ENCODE measurements at regions of chr19 and their contacts with region 1.

Region 1: DNA sequence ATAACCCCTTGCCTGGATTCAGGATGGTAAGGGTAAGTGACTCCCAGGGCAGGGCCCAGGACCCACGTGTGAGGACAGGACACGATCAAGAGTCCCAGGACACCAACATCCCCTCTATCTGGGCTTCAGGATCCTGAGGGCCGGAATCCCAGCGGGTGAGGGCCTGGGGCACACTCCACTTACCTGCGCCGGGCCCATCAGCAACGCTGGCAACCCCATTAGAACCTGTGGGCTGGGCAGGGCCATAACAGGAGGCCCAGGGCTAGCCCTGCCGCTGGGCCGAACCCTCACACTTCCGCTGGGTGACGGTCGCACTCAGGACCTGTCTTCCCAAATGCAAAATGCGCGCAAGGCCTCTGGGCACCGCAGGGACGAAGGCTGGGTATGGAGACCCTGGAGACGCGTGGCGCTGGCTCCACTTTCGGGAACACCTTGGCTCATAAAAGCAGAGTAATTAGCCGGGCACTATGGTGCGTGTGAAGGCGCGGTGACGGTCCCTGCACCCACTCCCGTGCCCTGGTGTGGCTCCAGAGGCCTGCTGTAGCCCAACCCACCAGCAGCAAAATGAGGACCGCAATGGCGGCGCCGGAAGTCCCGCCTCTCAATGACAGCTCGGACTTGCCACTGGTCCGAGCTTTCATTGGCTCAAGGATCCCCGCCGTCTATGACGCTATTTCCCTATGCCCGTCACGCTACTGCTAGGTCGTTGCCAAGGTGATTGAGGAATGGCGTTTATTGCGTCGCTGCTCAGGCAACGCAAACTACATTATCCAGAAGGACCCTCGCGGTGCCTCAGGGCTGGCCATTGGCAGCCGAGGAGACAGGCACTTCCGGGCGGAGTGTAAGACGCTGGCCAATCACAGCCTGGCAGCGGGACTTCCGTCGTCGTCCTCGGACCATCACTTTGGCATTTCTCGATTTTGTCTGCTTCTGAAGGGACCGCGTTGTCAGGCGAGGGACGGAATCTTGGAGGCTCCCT is at the start of gene ZNF132:
- DNase-seq: peak; percentile 88
- ATAC-seq: peak; percentile 97
- H3K4me3 Mint-ChIP-seq: peak within 1 kb of the TSS; percentile 96
- H3K27ac Mint-ChIP-seq: peak within 1 kb of the TSS; percentile 97
- H3K4me1 Mint-ChIP-seq: peaks cover 20% of the 10 kb centered on the region
- H3K27me3 Mint-ChIP-seq: peaks cover 4% of the 10 kb centered on the region
- CTCF ChIP-seq: no peak
- total RNA-seq, gene ZNF132: 9.2 and 10.4 TPM in 2 replicates

Region 2: GRCh38 chr19:57841122-57841763 is 598.6 kb before region 1 on chr19:
- CTCF ChIA-PET with region 1: no interaction called
- POLR2A ChIA-PET with region 1: no interaction called
- intact Hi-C with region 1: no loop called
- DNase-seq: no peak
- ATAC-seq: no peak
- H3K4me3 Mint-ChIP-seq: no peak overlapping the region
- H3K27ac Mint-ChIP-seq: no peak overlapping the region
- H3K4me1 Mint-ChIP-seq: peaks cover 2% of the 10 kb centered on the region
- H3K27me3 Mint-ChIP-seq: no peaks in the 10 kb centered on the region
- CTCF ChIP-seq: no peak

Region 3: GRCh38 chr19:58228585-58229254 is 211.1 kb before region 1 on chr19 and contains the start of gene ZNF544:
- CTCF ChIA-PET with region 1: no interaction called
- POLR2A ChIA-PET with region 1: no interaction called
- intact Hi-C with region 1: no loop called
- DNase-seq: peak; percentile 66
- ATAC-seq: peak; percentile 83
- H3K4me3 Mint-ChIP-seq: peak within 1 kb of the TSS; percentile 97
- H3K27ac Mint-ChIP-seq: peak within 1 kb of the TSS; percentile 85
- H3K4me1 Mint-ChIP-seq: peaks cover 23% of the 10 kb centered on the region
- H3K27me3 Mint-ChIP-seq: no peaks in the 10 kb centered on the region
- CTCF ChIP-seq: no peak
- total RNA-seq, gene ZNF544: 45.2 and 61.7 TPM in 2 replicates

Region 4: GRCh38 chr19:58380722-58381466 is 59.0 kb before region 1 on chr19 and contains the start of gene ZNF837:
- CTCF ChIA-PET with region 1: no interaction called
- POLR2A ChIA-PET with region 1: interaction called, 6 read pairs
- intact Hi-C with region 1: loop called (anchors 1 kb)
- DNase-seq: peak; percentile 96
- ATAC-seq: peak; percentile 86
- H3K4me3 Mint-ChIP-seq: peak within 1 kb of the TSS; percentile 83
- H3K27ac Mint-ChIP-seq: peak within 1 kb of the TSS; percentile 87
- H3K4me1 Mint-ChIP-seq: peaks cover 37% of the 10 kb centered on the region
- H3K27me3 Mint-ChIP-seq: no peaks in the 10 kb centered on the region
- CTCF ChIP-seq: no peak
- total RNA-seq, gene ZNF837: 3.1 and 3.5 TPM in 2 replicates

Region 5: DNA sequence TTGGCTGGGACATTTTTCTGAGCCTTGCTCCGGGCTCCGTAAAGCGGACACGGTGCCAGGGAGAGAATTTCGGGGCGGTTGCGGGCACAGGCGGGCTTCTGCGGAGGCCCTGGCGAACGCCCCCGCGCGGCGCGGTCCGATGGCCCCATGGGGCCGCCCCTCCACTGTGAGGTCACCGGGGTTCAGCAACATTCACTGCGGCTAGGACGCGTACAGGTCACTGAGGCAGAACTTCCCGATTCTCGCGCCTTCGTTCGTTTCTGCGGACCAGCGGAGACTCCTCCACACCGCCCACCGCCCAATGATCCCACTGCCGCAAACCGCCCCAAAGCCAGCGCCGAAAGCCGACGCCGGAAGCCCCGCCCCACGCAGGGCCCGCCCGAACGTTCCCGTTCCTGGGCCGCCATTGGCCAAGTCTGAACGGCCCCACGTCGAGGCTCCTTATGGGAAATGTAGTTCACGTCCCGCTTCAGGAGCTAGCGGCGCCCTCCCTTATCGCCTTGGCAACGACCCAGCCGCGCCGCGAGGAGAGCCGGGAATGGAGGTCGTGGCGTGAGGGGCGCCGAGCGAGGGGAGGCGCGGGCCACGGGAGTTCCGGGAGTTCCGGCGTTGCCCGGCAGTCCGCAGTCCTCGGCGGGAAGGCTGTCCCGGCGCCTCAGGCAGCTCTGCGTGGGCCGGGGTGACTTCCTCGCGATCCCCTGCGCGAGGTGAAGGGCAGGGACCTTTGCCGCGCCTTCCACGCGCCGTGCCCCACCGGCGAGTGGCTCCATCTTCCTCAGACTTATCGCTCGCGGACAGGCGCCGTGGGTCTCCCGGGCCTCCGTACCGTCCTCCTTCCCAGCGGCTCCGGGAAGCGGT is 31.5 kb before region 1 on chr19 and contains the start of gene ZNF584:
- CTCF ChIA-PET with region 1: no interaction called
- POLR2A ChIA-PET with region 1: interaction called, 19 read pairs
- intact Hi-C with region 1: loop called (anchors 1 kb)
- DNase-seq: peak; percentile 93
- ATAC-seq: peak; percentile 95
- H3K4me3 Mint-ChIP-seq: peak within 1 kb of the TSS; percentile 95
- H3K27ac Mint-ChIP-seq: peak within 1 kb of the TSS; percentile 92
- H3K4me1 Mint-ChIP-seq: peaks cover 32% of the 10 kb centered on the region
- H3K27me3 Mint-ChIP-seq: no peaks in the 10 kb centered on the region
- CTCF ChIP-seq: no peak
- total RNA-seq, gene ZNF584: 8.6 and 9.6 TPM in 2 replicates

Region 6: GRCh38 chr19:58475714-58476497 is 36.0 kb after region 1 on chr19 and contains the start of gene ZNF446:
- CTCF ChIA-PET with region 1: no interaction called
- POLR2A ChIA-PET with region 1: interaction called, 6 read pairs
- intact Hi-C with region 1: loop called (anchors 1 kb)
- DNase-seq: peak; percentile 91
- ATAC-seq: peak; percentile 88
- H3K4me3 Mint-ChIP-seq: peak within 1 kb of the TSS; percentile 94
- H3K27ac Mint-ChIP-seq: peak within 1 kb of the TSS; percentile 95
- H3K4me1 Mint-ChIP-seq: peaks cover 20% of the 10 kb centered on the region
- H3K27me3 Mint-ChIP-seq: no peaks in the 10 kb centered on the region
- CTCF ChIP-seq: no peak
- total RNA-seq, gene ZNF446: 9.6 and 10.4 TPM in 2 replicates

Region 7: GRCh38 chr19:58558623-58559274 is 118.9 kb after region 1 on chr19:
- CTCF ChIA-PET with region 1: no interaction called
- POLR2A ChIA-PET with region 1: interaction called, 3 read pairs
- intact Hi-C with region 1: loop called (anchors 1 kb)
- DNase-seq: peak; percentile 97
- ATAC-seq: peak; percentile 72
- H3K4me3 Mint-ChIP-seq: peak overlapping the region; percentile 97
- H3K27ac Mint-ChIP-seq: peak overlapping the region; percentile 97
- H3K4me1 Mint-ChIP-seq: peaks cover 82% of the 10 kb centered on the region
- H3K27me3 Mint-ChIP-seq: no peaks in the 10 kb centered on the region
- CTCF ChIP-seq: no peak

Measured in activated B cell treated with CpG ODN at 0.5 μM for 24 hours (primary cell).